ENCODE measurements at regions of chr10 and their contacts with region 1.

Region 1: DNA sequence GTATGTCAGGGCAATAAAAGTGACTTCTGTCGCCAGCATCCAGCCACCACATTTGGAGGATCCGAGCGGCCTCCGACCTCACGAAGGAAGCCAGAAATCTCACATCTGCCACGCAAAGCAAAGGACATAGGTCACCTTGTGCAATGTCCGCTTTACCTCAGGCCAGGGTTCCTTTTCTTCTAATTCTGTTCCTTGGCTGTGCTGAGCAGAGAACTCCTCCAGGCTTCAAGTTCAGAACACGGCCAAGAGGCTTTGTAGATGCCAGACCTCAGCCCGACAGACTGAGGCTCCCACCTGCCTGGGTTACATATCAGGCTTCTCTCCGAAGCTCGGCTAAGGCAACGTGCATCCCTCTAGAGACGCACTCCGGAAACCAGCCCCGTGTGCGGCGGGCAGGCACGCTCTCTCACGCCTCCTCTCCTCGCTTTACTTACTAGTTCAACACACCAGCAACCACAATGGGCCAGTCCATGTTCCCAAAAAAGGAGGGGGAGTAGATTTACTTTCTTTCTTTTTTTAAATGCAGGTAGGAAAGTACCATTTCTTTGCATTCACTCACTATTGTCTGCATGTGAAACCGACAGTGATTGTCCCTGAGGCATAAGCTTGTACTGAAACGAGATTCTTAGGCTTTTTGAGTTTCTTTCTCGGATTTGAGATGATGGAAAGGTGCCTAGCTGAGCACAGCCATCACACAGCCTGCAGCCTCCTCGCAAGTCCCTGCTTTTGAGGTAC is 122.4 kb upstream of the AFAP1L2 start:
- DNase-seq: peak; percentile 80 to 98 (median 90)
- ATAC-seq: peak; percentile 86
- H3K4me3 ChIP-seq: peak overlapping the region; percentile 69 to 70
- H3K4me3 Mint-ChIP-seq: peak overlapping the region; percentile 92
- H3K27ac ChIP-seq: peak overlapping the region; percentile 89 to 93
- H3K27ac Mint-ChIP-seq: peak overlapping the region; percentile 97
- H3K4me1 ChIP-seq: peaks cover 47% of the 10 kb centered on the region
- H3K4me1 Mint-ChIP-seq: peaks cover 59% of the 10 kb centered on the region
- H3K27me3 ChIP-seq: no peaks in the 10 kb centered on the region
- H3K27me3 Mint-ChIP-seq: no peaks in the 10 kb centered on the region
- CTCF ChIP-seq: no peak

Region 2: GRCh38 chr10:114492351-114493037 is 34.2 kb before region 1 on chr10:
- CTCF ChIA-PET with region 1: interaction called, 6 read pairs
- POLR2A ChIA-PET with region 1: interaction called, 29 read pairs
- intact Hi-C with region 1: loop called (anchors 1 to 5 kb)
- DNase-seq: peak in 2 of 9 experiments; percentile 30 to 67
- ATAC-seq: peak; percentile 22
- H3K4me3 ChIP-seq: no peak overlapping the region
- H3K4me3 Mint-ChIP-seq: peak overlapping the region; percentile 67
- H3K27ac ChIP-seq: peak overlapping the region; percentile 20 to 24
- H3K27ac Mint-ChIP-seq: peak overlapping the region; percentile 83
- H3K4me1 ChIP-seq: peaks cover 68% of the 10 kb centered on the region
- H3K4me1 Mint-ChIP-seq: peaks cover 84% of the 10 kb centered on the region
- H3K27me3 ChIP-seq: no peaks in the 10 kb centered on the region
- H3K27me3 Mint-ChIP-seq: no peaks in the 10 kb centered on the region
- CTCF ChIP-seq: no peak

Region 3: GRCh38 chr10:114504769-114505579 is 21.7 kb before region 1 on chr10:
- CTCF ChIA-PET with region 1: interaction called, 10 read pairs
- POLR2A ChIA-PET with region 1: interaction called, 29 read pairs
- intact Hi-C with region 1: no loop called
- DNase-seq: no peak
- ATAC-seq: no peak
- H3K4me3 ChIP-seq: no peak overlapping the region
- H3K4me3 Mint-ChIP-seq: no peak overlapping the region
- H3K27ac ChIP-seq: no peak overlapping the region
- H3K27ac Mint-ChIP-seq: peak overlapping the region; percentile 78
- H3K4me1 ChIP-seq: peaks cover 96% of the 10 kb centered on the region
- H3K4me1 Mint-ChIP-seq: peaks cover 92% of the 10 kb centered on the region
- H3K27me3 ChIP-seq: no peaks in the 10 kb centered on the region
- H3K27me3 Mint-ChIP-seq: no peaks in the 10 kb centered on the region
- CTCF ChIP-seq: no peak

Region 4: GRCh38 chr10:114541081-114541796 is 14.6 kb after region 1 on chr10:
- CTCF ChIA-PET with region 1: interaction called, 312 read pairs
- POLR2A ChIA-PET with region 1: interaction called, 209 read pairs
- intact Hi-C with region 1: loop called (anchors 1 kb)
- DNase-seq: peak; percentile 60 to 97 (median 79)
- ATAC-seq: peak; percentile 79
- H3K4me3 ChIP-seq: peak overlapping the region in 1 of 2 experiments; percentile 6
- H3K4me3 Mint-ChIP-seq: peak overlapping the region; percentile 53
- H3K27ac ChIP-seq: peak overlapping the region; percentile 88 to 93
- H3K27ac Mint-ChIP-seq: peak overlapping the region; percentile 99
- H3K4me1 ChIP-seq: peaks cover 91% of the 10 kb centered on the region
- H3K4me1 Mint-ChIP-seq: peaks cover 97% of the 10 kb centered on the region
- H3K27me3 ChIP-seq: no peaks in the 10 kb centered on the region
- H3K27me3 Mint-ChIP-seq: no peaks in the 10 kb centered on the region
- CTCF ChIP-seq: no peak